Caco-2 (cell line): ENCODE measurements at regions of chr3 and their contacts with region 1.

Region 1: GRCh38 chr3:36868614-36869436 is 76.0 kb downstream of the TRANK1 start:
- DNase-seq: peak; percentile 45 to 60
- H3K4me3 ChIP-seq: no peak overlapping the region
- H3K4me3 Mint-ChIP-seq: no peak overlapping the region
- H3K27ac Mint-ChIP-seq: no peak overlapping the region
- H3K4me1 ChIP-seq: no peaks in the 10 kb centered on the region
- H3K4me1 Mint-ChIP-seq: no peaks in the 10 kb centered on the region
- H3K27me3 ChIP-seq: no peaks in the 10 kb centered on the region
- H3K27me3 Mint-ChIP-seq: peaks cover 3% of the 10 kb centered on the region
- CTCF ChIP-seq: peak; percentile 49 to 69

Region 2: GRCh38 chr3:36729204-36730056 is 139.4 kb before region 1 on chr3:
- CTCF ChIA-PET with region 1: interaction called, 7 read pairs
- POLR2A ChIA-PET with region 1: no interaction called
- intact Hi-C with region 1: loop called (anchors 1 kb)
- DNase-seq: peak in 1 of 2 experiments; percentile 43
- H3K4me3 ChIP-seq: no peak overlapping the region
- H3K4me3 Mint-ChIP-seq: no peak overlapping the region
- H3K27ac Mint-ChIP-seq: no peak overlapping the region
- H3K4me1 ChIP-seq: peaks cover 16% of the 10 kb centered on the region; the same call in 1 of the 2 replicates
- H3K4me1 Mint-ChIP-seq: peaks cover 26% of the 10 kb centered on the region
- H3K27me3 ChIP-seq: no peaks in the 10 kb centered on the region
- H3K27me3 Mint-ChIP-seq: peaks cover 12% of the 10 kb centered on the region
- CTCF ChIP-seq: peak; percentile 61 to 65

Region 3: DNA sequence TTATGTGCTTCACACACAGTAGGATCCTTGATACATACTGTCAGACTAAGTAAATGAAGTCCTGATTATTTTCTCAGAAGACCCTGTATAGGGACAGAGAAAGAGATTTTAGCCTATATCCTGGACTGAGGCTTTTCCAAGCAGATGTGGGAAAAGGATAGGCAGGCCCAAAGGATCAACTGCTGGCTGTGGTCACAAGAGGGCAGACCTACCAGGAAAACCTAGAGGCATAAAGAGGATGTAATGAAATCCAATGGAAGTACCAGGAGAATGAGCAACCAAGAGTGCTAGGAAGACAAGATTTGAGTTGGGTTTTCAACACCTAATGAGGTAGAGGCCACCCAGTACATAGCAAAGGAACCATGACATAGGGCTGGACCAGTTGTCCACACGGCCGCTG is 127.5 kb before region 1 on chr3:
- CTCF ChIA-PET with region 1: no interaction called
- POLR2A ChIA-PET with region 1: no interaction called
- intact Hi-C with region 1: loop called (anchors 1 kb)
- DNase-seq: no peak
- H3K4me3 ChIP-seq: no peak overlapping the region
- H3K4me3 Mint-ChIP-seq: no peak overlapping the region
- H3K27ac Mint-ChIP-seq: no peak overlapping the region
- H3K4me1 ChIP-seq: peaks cover 6% of the 10 kb centered on the region; the same call in 1 of the 2 replicates
- H3K4me1 Mint-ChIP-seq: no peaks in the 10 kb centered on the region
- H3K27me3 ChIP-seq: no peaks in the 10 kb centered on the region
- H3K27me3 Mint-ChIP-seq: peaks cover 10% of the 10 kb centered on the region
- CTCF ChIP-seq: peak; percentile 25 to 51

Region 4: GRCh38 chr3:36792342-36792741 is 76.5 kb before region 1 on chr3:
- CTCF ChIA-PET with region 1: interaction called, 24 read pairs
- POLR2A ChIA-PET with region 1: no interaction called
- intact Hi-C with region 1: loop called (anchors 1 kb)
- DNase-seq: peak in 1 of 2 experiments; percentile 60
- H3K4me3 ChIP-seq: no peak overlapping the region
- H3K4me3 Mint-ChIP-seq: no peak overlapping the region
- H3K27ac Mint-ChIP-seq: no peak overlapping the region
- H3K4me1 ChIP-seq: no peaks in the 10 kb centered on the region
- H3K4me1 Mint-ChIP-seq: no peaks in the 10 kb centered on the region
- H3K27me3 ChIP-seq: no peaks in the 10 kb centered on the region
- H3K27me3 Mint-ChIP-seq: peaks cover 23% of the 10 kb centered on the region
- CTCF ChIP-seq: peak; percentile 60 to 73

Region 5: GRCh38 chr3:36837089-36837488 is 31.7 kb before region 1 on chr3:
- CTCF ChIA-PET with region 1: no interaction called
- POLR2A ChIA-PET with region 1: no interaction called
- intact Hi-C with region 1: loop called (anchors 2 kb)
- DNase-seq: no peak
- H3K4me3 ChIP-seq: no peak overlapping the region
- H3K4me3 Mint-ChIP-seq: no peak overlapping the region
- H3K27ac Mint-ChIP-seq: no peak overlapping the region
- H3K4me1 ChIP-seq: no peaks in the 10 kb centered on the region
- H3K4me1 Mint-ChIP-seq: no peaks in the 10 kb centered on the region
- H3K27me3 ChIP-seq: no peaks in the 10 kb centered on the region
- H3K27me3 Mint-ChIP-seq: no peaks in the 10 kb centered on the region
- CTCF ChIP-seq: no peak

Region 6: GRCh38 chr3:37096288-37096687 is 227.5 kb after region 1 on chr3:
- CTCF ChIA-PET with region 1: no interaction called
- POLR2A ChIA-PET with region 1: no interaction called
- intact Hi-C with region 1: no loop called
- DNase-seq: no peak
- H3K4me3 ChIP-seq: no peak overlapping the region
- H3K4me3 Mint-ChIP-seq: no peak overlapping the region
- H3K27ac Mint-ChIP-seq: no peak overlapping the region
- H3K4me1 ChIP-seq: no peaks in the 10 kb centered on the region
- H3K4me1 Mint-ChIP-seq: no peaks in the 10 kb centered on the region
- H3K27me3 ChIP-seq: no peaks in the 10 kb centered on the region
- H3K27me3 Mint-ChIP-seq: no peaks in the 10 kb centered on the region
- CTCF ChIP-seq: no peak